ENCODE measurements at regions of chr4 and their contacts with region 1.

Region 1: DNA sequence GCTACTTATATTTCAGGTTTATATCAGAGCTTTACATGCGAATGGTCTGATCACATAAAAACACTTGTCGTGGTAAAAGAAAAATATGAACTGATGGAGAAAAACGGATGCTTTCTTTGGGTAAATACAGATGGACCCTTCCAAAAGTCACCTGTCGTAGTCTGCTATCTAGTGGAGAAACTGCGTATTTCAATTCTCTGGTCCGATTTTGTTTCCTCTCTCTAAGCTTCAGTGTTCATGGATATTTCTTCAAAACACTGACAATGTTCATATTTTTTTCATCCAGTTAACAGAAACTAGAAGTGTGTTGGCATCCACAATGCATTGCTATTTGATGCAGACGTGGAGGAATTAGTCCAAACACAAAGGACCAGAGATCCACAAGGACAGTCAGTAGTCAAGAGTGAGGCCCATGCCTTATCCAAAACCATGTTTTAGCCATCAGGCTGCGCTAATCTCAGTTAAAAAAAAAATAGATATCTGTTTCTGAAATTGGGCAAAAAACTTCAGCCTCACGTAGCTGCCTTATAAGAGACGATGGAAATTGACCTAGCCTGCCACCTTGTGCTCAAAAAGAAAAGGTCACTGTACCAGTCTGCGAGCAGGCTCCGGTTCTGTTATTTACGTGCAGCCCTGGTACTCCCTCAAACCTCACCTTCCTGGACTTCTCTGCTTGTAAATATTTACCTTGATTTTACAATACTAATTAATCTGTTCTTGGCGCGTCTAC is 16.0 kb downstream of the MEPE start:
- DNase-seq: no peak
- H3K4me3 ChIP-seq: no peak overlapping the region
- CTCF ChIP-seq: peak; percentile 60

Region 2: DNA sequence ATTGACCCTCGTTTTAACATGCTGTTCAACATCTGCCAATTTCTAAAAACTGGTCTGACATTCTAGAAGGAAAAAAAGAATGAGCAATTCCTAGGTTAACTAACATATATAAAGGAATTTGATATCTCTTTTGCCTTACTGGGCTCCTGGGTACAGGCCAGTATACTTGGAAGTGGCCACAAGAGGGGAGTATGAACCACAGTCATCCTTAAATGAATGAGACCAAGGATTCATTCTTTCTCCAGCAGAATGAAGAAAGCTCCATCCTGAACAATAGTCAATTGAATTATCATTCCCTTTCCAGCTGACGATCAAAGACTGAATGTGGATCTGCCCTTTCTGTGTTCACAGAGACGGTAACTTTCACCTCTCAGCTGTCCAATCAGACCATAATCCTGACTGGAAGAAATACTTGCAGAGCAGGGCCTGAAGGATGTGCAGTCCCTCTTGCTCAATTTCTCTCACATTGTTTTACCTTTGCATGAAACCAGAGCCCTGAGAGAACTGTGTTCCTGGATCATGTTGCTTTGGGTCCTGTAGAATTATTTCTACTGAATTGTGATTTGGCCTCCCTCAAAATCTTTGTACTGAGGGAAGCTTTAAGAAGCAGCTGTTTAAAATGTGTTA is 304.8 kb before region 1 on chr4:
- CTCF ChIA-PET with region 1: interaction called, 66 read pairs
- POLR2A ChIA-PET with region 1: no interaction called
- DNase-seq: no peak
- H3K4me3 ChIP-seq: no peak overlapping the region
- CTCF ChIP-seq: peak; percentile 38

Region 3: GRCh38 chr4:87679449-87680169 is 169.2 kb before region 1 on chr4:
- CTCF ChIA-PET with region 1: interaction called, 177 read pairs
- POLR2A ChIA-PET with region 1: no interaction called
- DNase-seq: no peak
- H3K4me3 ChIP-seq: no peak overlapping the region
- CTCF ChIP-seq: peak; percentile 62

Region 4: GRCh38 chr4:87758270-87758669 is 90.5 kb before region 1 on chr4:
- CTCF ChIA-PET with region 1: no interaction called
- POLR2A ChIA-PET with region 1: no interaction called
- DNase-seq: no peak
- H3K4me3 ChIP-seq: no peak overlapping the region
- CTCF ChIP-seq: no peak

Region 5: GRCh38 chr4:87802858-87803257 is 45.9 kb before region 1 on chr4:
- CTCF ChIA-PET with region 1: no interaction called
- POLR2A ChIA-PET with region 1: no interaction called
- DNase-seq: no peak
- H3K4me3 ChIP-seq: no peak overlapping the region
- CTCF ChIP-seq: no peak

Region 6: GRCh38 chr4:87961993-87962392 is 113.2 kb after region 1 on chr4:
- CTCF ChIA-PET with region 1: interaction called, 15 read pairs
- POLR2A ChIA-PET with region 1: no interaction called
- DNase-seq: no peak
- H3K4me3 ChIP-seq: no peak overlapping the region
- CTCF ChIP-seq: no peak

Region 7: GRCh38 chr4:87985097-87985886 is 136.5 kb after region 1 on chr4:
- CTCF ChIA-PET with region 1: interaction called, 348 read pairs
- POLR2A ChIA-PET with region 1: no interaction called
- DNase-seq: no peak
- H3K4me3 ChIP-seq: no peak overlapping the region
- CTCF ChIP-seq: peak; percentile 85

Region 8: GRCh38 chr4:88033309-88033708 is 184.5 kb after region 1 on chr4:
- CTCF ChIA-PET with region 1: interaction called, 13 read pairs
- POLR2A ChIA-PET with region 1: no interaction called
- DNase-seq: no peak
- H3K4me3 ChIP-seq: no peak overlapping the region
- CTCF ChIP-seq: peak; percentile 51

Region 9: GRCh38 chr4:88045021-88045420 is 196.2 kb after region 1 on chr4:
- CTCF ChIA-PET with region 1: no interaction called
- POLR2A ChIA-PET with region 1: no interaction called
- DNase-seq: no peak
- H3K4me3 ChIP-seq: no peak overlapping the region
- CTCF ChIP-seq: no peak

Region 10: DNA sequence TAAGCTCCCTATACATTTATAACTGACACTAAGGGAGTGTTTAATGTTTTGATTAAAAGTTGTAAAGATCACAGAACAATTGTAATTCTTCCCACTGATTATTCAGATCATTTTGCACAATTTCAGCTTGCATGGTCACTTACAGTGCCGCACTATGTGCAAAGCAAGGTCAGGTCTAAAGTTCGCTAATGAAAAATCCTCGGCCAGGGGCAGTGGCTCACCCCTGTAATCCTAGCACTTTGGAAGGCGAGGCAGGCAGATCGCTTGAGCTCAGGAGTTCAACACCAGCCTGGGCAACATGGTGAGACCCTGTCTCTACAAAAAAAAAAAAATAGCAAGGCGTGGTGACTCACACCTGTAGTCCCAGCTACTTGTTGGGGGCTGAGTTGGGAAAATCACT is 215.6 kb after region 1 on chr4:
- CTCF ChIA-PET with region 1: no interaction called
- POLR2A ChIA-PET with region 1: no interaction called
- DNase-seq: no peak
- H3K4me3 ChIP-seq: no peak overlapping the region
- CTCF ChIP-seq: no peak